ENCODE measurements at regions of chr1 and their contacts with region 1.

Region 1: DNA sequence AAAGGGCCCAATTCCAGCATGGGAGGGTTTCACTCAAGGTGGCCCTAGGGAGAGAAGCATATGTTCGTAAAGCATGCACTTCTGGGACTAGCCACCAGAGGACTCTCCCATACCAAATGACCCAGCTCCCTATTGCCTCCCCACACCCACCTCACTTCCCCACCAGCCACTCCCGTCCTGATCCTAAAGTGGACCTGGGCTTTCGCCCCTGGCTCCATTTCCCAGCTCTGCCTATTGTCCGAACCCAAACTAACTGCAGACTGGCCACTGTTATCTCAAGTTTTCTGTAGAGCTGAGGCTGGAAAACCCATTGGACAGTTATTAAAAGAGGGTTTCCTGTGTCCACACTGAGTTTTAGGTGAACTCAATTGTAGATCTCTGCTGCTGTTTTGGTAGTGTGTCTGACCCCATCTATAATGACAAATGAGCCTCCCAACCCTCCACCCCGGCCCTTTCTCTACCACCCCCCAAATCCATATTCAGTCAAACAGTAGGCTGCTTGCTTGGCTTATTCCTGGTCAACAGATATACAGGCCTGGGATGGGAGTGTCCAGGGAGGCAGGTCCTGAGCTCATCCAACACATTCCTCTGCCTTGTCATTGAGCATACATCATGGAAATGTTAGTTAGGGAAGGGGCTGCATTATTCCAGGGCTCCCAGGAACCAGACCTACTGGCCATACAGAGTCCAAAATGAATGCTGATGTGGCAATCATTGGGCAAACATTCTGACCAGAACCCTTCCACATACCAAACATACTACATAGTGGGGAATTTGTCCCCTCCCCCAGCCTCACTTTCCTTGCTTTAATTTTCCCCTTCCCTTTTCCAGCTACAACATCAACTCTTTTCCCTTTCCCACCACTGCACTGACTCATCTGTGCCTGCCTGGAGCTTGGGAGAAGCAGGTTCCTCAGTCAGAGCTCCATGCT is 59.2 kb downstream of the ABCA4 start:
- DNase-seq: peak; percentile 55 to 77 (median 73)
- ATAC-seq: peak; percentile 98
- H3K4me3 ChIP-seq: no peak overlapping the region
- H3K27ac ChIP-seq: no peak overlapping the region
- H3K4me1 ChIP-seq: no peaks in the 10 kb centered on the region
- H3K27me3 ChIP-seq: peaks cover 0 to 6% of the 10 kb centered on the region in 2 experiments; a peak in 2 of 5 replicates
- CTCF ChIP-seq: peak; percentile 79 to 80 (median 79)
- EP300 ChIP-seq: no peak
- POLR2A ChIP-seq: no peak
- RAD21 ChIP-seq: peak; percentile 76 to 89

Region 2: GRCh38 chr1:94240822-94241221 is 179.0 kb after region 1 on chr1:
- CTCF ChIA-PET with region 1: no interaction called
- POLR2A ChIA-PET with region 1: no interaction called
- in situ Hi-C with region 1: no loop called
- intact Hi-C with region 1: loop called (anchors 2 kb)
- DNase-seq: peak in 1 of 4 experiments; percentile 22
- ATAC-seq: no peak
- H3K4me3 ChIP-seq: no peak overlapping the region
- H3K27ac ChIP-seq: no peak overlapping the region
- H3K4me1 ChIP-seq: peaks cover 0 to 9% of the 10 kb centered on the region in 2 experiments; a peak in 2 of 5 replicates
- H3K27me3 ChIP-seq: peaks cover 0 to 19% of the 10 kb centered on the region in 2 experiments; a peak in 3 of 5 replicates
- CTCF ChIP-seq: peak; percentile 24 to 42 (median 30); a peak in 4 of 6 replicates
- EP300 ChIP-seq: no peak
- POLR2A ChIP-seq: no peak
- RAD21 ChIP-seq: peak in 1 of 2 experiments; percentile 51; a peak in 2 of 4 replicates

Region 3: DNA sequence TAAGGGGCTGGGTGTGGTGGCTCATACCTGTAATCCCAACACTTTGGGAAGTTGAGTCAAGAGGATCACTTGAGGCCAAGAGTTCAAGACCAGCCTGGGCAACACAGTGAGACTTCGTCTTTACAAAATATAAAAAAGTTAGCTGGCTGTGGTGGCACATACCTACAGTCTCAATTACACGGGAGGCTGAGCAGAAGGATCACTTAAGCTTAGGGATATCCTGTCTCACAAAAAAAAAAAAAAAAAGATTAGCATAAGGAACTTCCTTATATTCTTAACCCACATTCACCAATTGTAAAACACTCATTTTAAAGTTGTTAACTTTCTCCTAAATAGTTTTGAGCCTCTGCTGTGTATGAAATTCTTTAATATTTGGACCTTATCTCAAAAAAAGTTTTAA is 409.5 kb after region 1 on chr1:
- CTCF ChIA-PET with region 1: no interaction called
- POLR2A ChIA-PET with region 1: no interaction called
- in situ Hi-C with region 1: loop called (anchors 10 kb)
- intact Hi-C with region 1: no loop called
- DNase-seq: no peak
- ATAC-seq: no peak
- H3K4me3 ChIP-seq: no peak overlapping the region
- H3K27ac ChIP-seq: no peak overlapping the region
- H3K4me1 ChIP-seq: no peaks in the 10 kb centered on the region
- H3K27me3 ChIP-seq: no peaks in the 10 kb centered on the region
- CTCF ChIP-seq: no peak
- EP300 ChIP-seq: no peak
- POLR2A ChIP-seq: no peak
- RAD21 ChIP-seq: no peak